Sigmoid colon (tissue), 7 donors: ENCODE measurements at regions of chr19 and their contacts with region 1.

Region 1: DNA sequence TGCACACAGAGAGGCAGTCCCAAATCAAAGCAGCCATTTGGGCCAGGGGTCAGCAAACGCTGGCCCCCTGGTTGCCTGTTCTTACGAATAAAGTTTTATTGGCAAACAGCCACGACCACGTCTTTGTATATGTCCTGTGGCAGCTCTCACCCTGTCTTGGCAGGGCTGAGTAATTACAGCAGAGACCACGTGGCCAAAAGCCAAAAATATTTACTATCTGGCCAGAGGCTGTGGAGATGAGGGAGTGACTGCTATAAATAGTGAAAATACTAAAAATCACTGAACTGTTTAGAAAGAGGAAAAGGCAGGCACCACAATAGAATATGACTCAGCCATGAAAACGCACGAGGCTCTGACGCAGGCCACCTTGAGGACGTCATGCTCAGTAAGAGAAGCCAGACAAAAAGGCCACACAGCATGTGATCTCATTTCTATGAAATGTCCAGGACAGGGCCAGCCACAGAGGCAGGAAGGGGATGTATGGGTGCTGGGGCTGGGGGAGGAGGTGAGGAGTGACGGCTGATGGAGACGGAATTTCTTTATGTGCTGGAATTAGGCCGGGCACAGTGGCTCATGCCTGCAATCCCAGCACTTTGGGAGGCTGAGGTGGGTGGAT is 29.4 kb downstream of the SMIM24 start:
- DNase-seq: peak; percentile 96
- H3K4me3 ChIP-seq: no peak overlapping the region
- H3K27ac ChIP-seq: peak overlapping the region; percentile 80 to 92 (median 86)
- H3K4me1 ChIP-seq: peaks cover 0 to 31% (median 20%) of the 10 kb centered on the region in 4 donors
- H3K27me3 ChIP-seq: no peaks in the 10 kb centered on the region
- CTCF ChIP-seq: no peak
- EP300 ChIP-seq: peak; percentile 96 to 100 (median 98)
- POLR2A ChIP-seq: no peak

Region 2: GRCh38 chr19:2820112-2820702 is 630.7 kb before region 1 on chr19:
- intact Hi-C with region 1: no loop called
- DNase-seq: no peak
- H3K4me3 ChIP-seq: peak overlapping the region; percentile 74 to 86 (median 78)
- H3K27ac ChIP-seq: peak overlapping the region; percentile 48 to 77 (median 63)
- H3K4me1 ChIP-seq: peaks cover 0 to 18% (median 10%) of the 10 kb centered on the region in 4 donors
- H3K27me3 ChIP-seq: no peaks in the 10 kb centered on the region
- CTCF ChIP-seq: no peak
- EP300 ChIP-seq: no peak
- POLR2A ChIP-seq: no peak

Region 3: GRCh38 chr19:3336680-3337523 is 114.0 kb before region 1 on chr19:
- intact Hi-C with region 1: no loop called
- DNase-seq: peak; percentile 99
- H3K4me3 ChIP-seq: no peak overlapping the region
- H3K27ac ChIP-seq: peak overlapping the region; percentile 93 to 99 (median 97)
- H3K4me1 ChIP-seq: peaks cover 0 to 64% (median 58%) of the 10 kb centered on the region in 4 donors
- H3K27me3 ChIP-seq: no peaks in the 10 kb centered on the region
- CTCF ChIP-seq: no peak
- EP300 ChIP-seq: peak; percentile 95 to 99 (median 98)
- POLR2A ChIP-seq: peak in 1 of 2 donors; percentile 28

Region 4: GRCh38 chr19:3365836-3366752 is 84.8 kb before region 1 on chr19 and contains the start of gene NFIC:
- intact Hi-C with region 1: loop called (anchors 5 kb)
- DNase-seq: peak; percentile 94
- H3K4me3 ChIP-seq: peak within 1 kb of the TSS; percentile 97 to 100 (median 99)
- H3K27ac ChIP-seq: peak within 1 kb of the TSS; percentile 98 to 100 (median 100)
- H3K4me1 ChIP-seq: peaks cover 0 to 71% (median 63%) of the 10 kb centered on the region in 4 donors
- H3K27me3 ChIP-seq: no peaks in the 10 kb centered on the region
- CTCF ChIP-seq: no peak
- EP300 ChIP-seq: peak in 3 of 4 donors; percentile 24 to 75 (median 42)
- POLR2A ChIP-seq: peak in 1 of 2 donors; percentile 12
- total RNA-seq, gene NFIC: 63.2 to 114 (median 74.2) TPM